Gastrocnemius medialis (tissue), 4 donors: ENCODE measurements at regions of chr9 and their contacts with region 1.

Region 1: GRCh38 chr9:137223078-137223970 is 1.3 kb upstream of the RNF208 start:
- DNase-seq: peak; percentile 97 to 98
- ATAC-seq: peak; percentile 89 to 90
- H3K4me3 ChIP-seq: peak overlapping the region; percentile 63 to 94 (median 88)
- H3K27ac ChIP-seq: peak overlapping the region; percentile 87 to 93 (median 90)
- H3K4me1 ChIP-seq: peaks cover 8 to 21% of the 10 kb centered on the region in 2 donors
- H3K27me3 ChIP-seq: peaks cover 5 to 7% (median 7%) of the 10 kb centered on the region in 3 donors
- CTCF ChIP-seq: no peak
- POLR2A ChIP-seq: peak; percentile 61

Region 2: DNA sequence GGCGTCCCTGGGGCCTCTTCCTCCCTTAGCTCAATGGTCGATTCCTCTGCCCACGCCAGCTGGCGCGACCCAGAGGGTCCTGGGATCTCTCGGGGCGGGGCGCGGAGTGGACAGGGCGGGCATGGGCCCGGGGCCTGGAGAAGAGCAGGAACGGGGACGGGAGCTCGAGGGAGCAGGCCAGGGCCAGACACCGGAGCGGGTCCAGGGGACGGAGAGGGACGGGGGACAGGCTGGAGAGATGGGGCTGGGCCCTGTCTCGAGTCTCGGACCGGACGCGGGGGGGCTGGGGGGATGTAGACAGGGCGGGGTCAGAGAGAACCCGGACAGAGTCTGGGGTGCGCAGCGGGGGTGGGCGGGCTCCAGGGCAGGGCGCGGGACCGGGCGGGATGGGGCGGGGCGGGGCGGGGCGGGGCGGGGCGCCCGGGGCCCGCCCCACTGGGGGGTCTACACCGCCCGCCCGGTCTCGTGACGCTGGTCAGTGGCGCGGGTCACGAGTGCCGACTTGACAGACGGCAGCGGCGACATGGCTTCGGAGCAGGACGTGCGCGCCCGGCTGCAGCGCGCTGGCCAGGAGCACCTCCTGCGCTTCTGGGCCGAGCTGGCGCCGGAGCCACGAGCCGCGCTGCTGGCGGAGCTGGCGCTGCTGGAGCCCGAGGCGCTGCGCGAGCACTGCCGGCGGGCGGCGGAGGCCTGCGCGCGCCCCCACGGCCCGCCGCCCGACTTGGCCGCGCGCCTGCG is 146.1 kb before region 1 on chr9 and contains the start of gene UAP1L1:
- in situ Hi-C with region 1: no loop called
- intact Hi-C with region 1: no loop called
- DNase-seq: peak; percentile 58
- ATAC-seq: peak; percentile 37 to 70
- H3K4me3 ChIP-seq: peak within 1 kb of the TSS; percentile 51 to 64 (median 56)
- H3K27ac ChIP-seq: peak within 1 kb of the TSS; percentile 54 to 55 (median 55)
- H3K4me1 ChIP-seq: peaks cover 0 to 12% of the 10 kb centered on the region in 2 donors
- H3K27me3 ChIP-seq: peaks cover 0 to 3% (median 0%) of the 10 kb centered on the region in 3 donors
- CTCF ChIP-seq: no peak
- POLR2A ChIP-seq: peak; percentile 69 to 70
- total RNA-seq, gene UAP1L1: 0.49 to 2.5 (median 1.5) TPM

Region 3: GRCh38 chr9:137114610-137115391 is 108.5 kb before region 1 on chr9 and contains the start of gene DPP7:
- in situ Hi-C with region 1: no loop called
- intact Hi-C with region 1: loop called (anchors 2 kb)
- DNase-seq: peak; percentile 53 to 67
- ATAC-seq: peak; percentile 91 to 93
- H3K4me3 ChIP-seq: peak within 1 kb of the TSS; percentile 76 to 97 (median 92)
- H3K27ac ChIP-seq: peak within 1 kb of the TSS; percentile 50 to 72 (median 64)
- H3K4me1 ChIP-seq: peaks cover 6 to 9% of the 10 kb centered on the region in 2 donors
- H3K27me3 ChIP-seq: no peaks in the 10 kb centered on the region
- CTCF ChIP-seq: peak in 1 of 5 experiments; percentile 22
- POLR2A ChIP-seq: peak; percentile 51 to 52
- total RNA-seq, gene DPP7: 36.9 to 63.1 (median 55.9) TPM

Region 4: DNA sequence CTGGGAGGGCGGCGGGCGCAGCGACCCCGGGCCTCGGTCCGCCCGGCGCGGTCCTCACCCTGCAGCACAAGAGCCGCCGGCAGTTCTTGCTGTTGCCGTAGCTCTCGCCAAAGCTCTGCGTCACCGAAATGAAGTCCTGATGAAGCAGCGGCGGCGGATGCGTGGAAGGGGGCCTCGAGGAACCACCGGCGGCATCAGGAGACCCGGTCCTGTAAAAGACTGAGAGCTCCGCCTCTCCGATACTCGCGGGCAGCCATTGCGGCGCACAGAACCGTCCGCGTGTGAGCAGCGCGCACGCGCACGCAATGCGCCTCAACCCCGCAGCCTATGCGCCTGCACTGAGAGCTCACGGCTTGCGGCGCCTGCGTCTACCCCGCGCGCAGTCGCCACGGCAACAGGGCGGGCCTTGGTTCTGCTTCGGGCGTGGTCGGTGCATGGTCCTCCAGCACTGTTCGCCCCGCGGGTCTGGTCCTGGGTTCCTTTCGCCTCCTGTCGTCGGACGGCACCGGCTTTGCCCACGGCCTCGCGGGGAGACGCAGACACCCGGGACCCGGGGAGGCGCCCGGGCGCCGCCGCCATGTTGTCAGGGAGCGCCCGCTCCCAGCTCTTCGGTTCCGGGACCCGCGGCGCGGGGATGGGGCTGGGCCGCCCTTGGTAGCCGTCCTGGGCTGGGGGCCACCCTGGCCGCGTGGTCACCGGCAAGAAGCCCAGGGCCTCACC is 93.7 kb before region 1 on chr9:
- in situ Hi-C with region 1: loop called in 2 of 4 experiments (anchors 10 kb)
- intact Hi-C with region 1: no loop called
- DNase-seq: peak; percentile 63 to 72
- ATAC-seq: peak; percentile 93 to 96
- H3K4me3 ChIP-seq: peak overlapping the region; percentile 62 to 88 (median 78)
- H3K27ac ChIP-seq: peak overlapping the region in 3 of 4 donors; percentile 49 to 54 (median 54)
- H3K4me1 ChIP-seq: peaks cover 12 to 17% of the 10 kb centered on the region in 2 donors
- H3K27me3 ChIP-seq: peaks cover 22 to 30% (median 28%) of the 10 kb centered on the region in 3 donors
- CTCF ChIP-seq: no peak
- POLR2A ChIP-seq: no peak

Region 5: GRCh38 chr9:137188490-137189296 is 34.6 kb before region 1 on chr9 and contains the starts of genes ANAPC2 and SSNA1:
- in situ Hi-C with region 1: no loop called
- intact Hi-C with region 1: loop called (anchors 1 kb)
- DNase-seq: peak; percentile 79 to 88
- ATAC-seq: peak; percentile 92 to 95
- H3K4me3 ChIP-seq: peak within 1 kb of the TSS; percentile 68 to 100 (median 97)
- H3K27ac ChIP-seq: peak within 1 kb of the TSS; percentile 85 to 98 (median 96)
- H3K4me1 ChIP-seq: peaks cover 39 to 44% of the 10 kb centered on the region in 2 donors
- H3K27me3 ChIP-seq: no peaks in the 10 kb centered on the region
- CTCF ChIP-seq: peak in 4 of 5 experiments; percentile 8 to 72 (median 38)
- POLR2A ChIP-seq: peak; percentile 84 to 92
- total RNA-seq, gene ANAPC2: 10.2 to 12.4 (median 10.8) TPM
- total RNA-seq, gene SSNA1: 73.3 to 164 (median 94.4) TPM

Region 6: GRCh38 chr9:137200311-137201204 is 22.8 kb before region 1 on chr9 and contains the start of gene TPRN:
- in situ Hi-C with region 1: no loop called
- intact Hi-C with region 1: loop called (anchors 1 kb)
- DNase-seq: peak; percentile 100
- ATAC-seq: peak; percentile 97
- H3K4me3 ChIP-seq: peak within 1 kb of the TSS; percentile 73 to 86 (median 77)
- H3K27ac ChIP-seq: peak within 1 kb of the TSS; percentile 83 to 92 (median 86)
- H3K4me1 ChIP-seq: peaks cover 61 to 70% of the 10 kb centered on the region in 2 donors
- H3K27me3 ChIP-seq: no peaks in the 10 kb centered on the region
- CTCF ChIP-seq: peak in 2 of 5 experiments; percentile 6 to 22
- POLR2A ChIP-seq: peak; percentile 89 to 94
- total RNA-seq, gene TPRN: 3.4 to 10.2 (median 6.3) TPM

Region 7: GRCh38 chr9:137240861-137241489 is 17.7 kb after region 1 on chr9 and contains the start of gene TUBB4B:
- in situ Hi-C with region 1: no loop called
- intact Hi-C with region 1: no loop called
- DNase-seq: peak; percentile 99 to 100
- ATAC-seq: peak; percentile 92 to 94
- H3K4me3 ChIP-seq: peak within 1 kb of the TSS; percentile 79 to 100 (median 85)
- H3K27ac ChIP-seq: peak within 1 kb of the TSS; percentile 93 to 98 (median 97)
- H3K4me1 ChIP-seq: peaks cover 60 to 77% of the 10 kb centered on the region in 2 donors
- H3K27me3 ChIP-seq: no peaks in the 10 kb centered on the region
- CTCF ChIP-seq: peak in 1 of 5 experiments; percentile 19
- POLR2A ChIP-seq: peak; percentile 100
- total RNA-seq, gene TUBB4B: 222 to 495 (median 363) TPM

Region 8: GRCh38 chr9:137254624-137255447 is 31.5 kb after region 1 on chr9 and contains the start of gene NELFB:
- in situ Hi-C with region 1: no loop called
- intact Hi-C with region 1: loop called (anchors 1 kb)
- DNase-seq: peak; percentile 79 to 85
- ATAC-seq: peak; percentile 91 to 94
- H3K4me3 ChIP-seq: peak within 1 kb of the TSS; percentile 77 to 99 (median 92)
- H3K27ac ChIP-seq: peak within 1 kb of the TSS; percentile 68 to 91 (median 81)
- H3K4me1 ChIP-seq: peaks cover 22 to 29% of the 10 kb centered on the region in 2 donors
- H3K27me3 ChIP-seq: no peaks in the 10 kb centered on the region
- CTCF ChIP-seq: peak in 3 of 5 experiments; percentile 8 to 36 (median 28)
- POLR2A ChIP-seq: peak; percentile 71 to 79
- total RNA-seq, gene NELFB: 21.6 to 61.5 (median 39.4) TPM

Region 9: DNA sequence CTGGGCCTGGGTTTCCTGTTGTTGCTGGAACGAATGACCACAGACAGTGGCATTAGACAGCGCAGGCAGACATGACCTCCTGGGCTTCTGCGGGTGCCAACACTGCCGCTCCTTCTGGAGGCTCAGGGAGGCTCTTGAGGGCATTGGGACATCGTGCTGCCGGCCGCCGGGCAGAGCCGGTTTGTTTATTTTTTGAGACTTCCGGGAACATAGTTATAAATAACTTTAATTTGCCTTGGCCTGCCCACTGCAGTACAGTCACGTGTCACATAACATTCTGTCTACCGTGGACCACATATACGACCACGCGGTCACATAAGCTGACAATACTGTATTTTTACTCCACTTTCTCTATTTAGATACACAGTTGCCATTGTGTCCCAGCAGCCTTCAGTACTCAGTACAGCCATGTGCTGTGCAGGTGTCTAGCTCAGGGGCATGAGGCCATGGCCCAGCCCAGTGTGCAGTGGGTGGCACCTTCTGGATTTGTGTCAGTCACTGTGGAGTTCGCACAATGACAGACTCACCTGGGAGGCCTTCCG is 46.0 kb after region 1 on chr9:
- in situ Hi-C with region 1: no loop called
- intact Hi-C with region 1: loop called (anchors 5 kb)
- DNase-seq: peak; percentile 67 to 84
- ATAC-seq: peak; percentile 92 to 93
- H3K4me3 ChIP-seq: peak overlapping the region; percentile 59 to 60 (median 60)
- H3K27ac ChIP-seq: peak overlapping the region; percentile 88 to 94 (median 92)
- H3K4me1 ChIP-seq: peaks cover 24 to 27% of the 10 kb centered on the region in 2 donors
- H3K27me3 ChIP-seq: no peaks in the 10 kb centered on the region
- CTCF ChIP-seq: no peak
- POLR2A ChIP-seq: peak; percentile 52 to 72

Region 10: GRCh38 chr9:137365056-137365455 is 141.7 kb after region 1 on chr9:
- in situ Hi-C with region 1: no loop called
- intact Hi-C with region 1: no loop called
- DNase-seq: no peak
- ATAC-seq: no peak
- H3K4me3 ChIP-seq: no peak overlapping the region
- H3K27ac ChIP-seq: no peak overlapping the region
- H3K4me1 ChIP-seq: no peaks in the 10 kb centered on the region
- H3K27me3 ChIP-seq: no peaks in the 10 kb centered on the region
- CTCF ChIP-seq: no peak
- POLR2A ChIP-seq: no peak